Transverse colon (tissue), 4 donors: ENCODE measurements at regions of chr4 and their contacts with region 1.

Region 1: DNA sequence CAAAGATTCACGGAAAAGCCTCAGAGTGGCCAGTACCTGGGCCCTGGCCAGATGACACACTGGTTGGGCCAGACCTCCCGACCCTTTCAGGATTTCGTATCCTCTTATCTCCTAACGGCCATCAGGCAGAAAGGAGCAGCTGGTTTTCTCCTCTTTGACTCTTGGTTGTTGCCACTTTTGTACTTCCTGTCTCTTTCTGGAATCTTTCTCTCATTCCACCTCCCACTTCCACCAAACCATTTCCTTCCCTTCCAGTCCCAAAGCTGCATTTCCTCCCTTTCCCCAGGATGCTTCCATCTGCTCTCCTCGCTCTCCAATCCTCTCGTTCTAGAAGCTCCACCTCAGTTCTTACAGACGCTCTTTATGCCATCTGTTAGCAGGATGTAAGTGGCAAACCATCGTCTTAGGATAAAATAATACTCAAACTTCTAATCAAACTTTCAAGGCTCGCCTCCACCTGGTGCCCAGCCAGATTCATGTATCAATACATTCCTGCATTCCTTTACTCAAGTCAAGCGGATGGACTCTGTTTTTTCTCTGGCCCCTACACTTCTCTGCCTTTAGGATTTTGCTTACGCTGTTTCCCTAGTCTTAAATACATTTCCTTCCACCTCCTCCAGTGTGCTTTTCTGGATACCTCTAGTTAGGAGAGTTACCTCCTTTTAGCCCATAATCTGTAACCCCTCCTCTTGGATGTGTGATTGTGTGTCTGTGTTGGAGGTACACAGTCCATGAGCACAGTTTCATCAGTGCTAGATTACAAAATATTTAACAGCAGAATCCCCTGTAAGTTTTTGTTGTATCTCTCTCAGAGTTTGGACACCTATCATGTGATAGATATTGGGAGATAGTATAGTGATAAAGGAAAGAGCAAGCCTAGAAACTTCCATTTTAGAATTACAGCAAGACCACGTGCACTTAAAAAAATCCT is 70.4 kb downstream of the LDB2 start:
- DNase-seq: no peak
- H3K4me3 ChIP-seq: no peak overlapping the region
- H3K27ac ChIP-seq: peak overlapping the region in 1 of 4 donors; percentile 3
- H3K4me1 ChIP-seq: no peaks in the 10 kb centered on the region
- H3K27me3 ChIP-seq: no peaks in the 10 kb centered on the region
- CTCF ChIP-seq: no peak
- EP300 ChIP-seq: no peak
- POLR2A ChIP-seq: no peak

Region 2: GRCh38 chr4:16006791-16007446 is 821.1 kb before region 1 on chr4:
- in situ Hi-C with region 1: no loop called
- intact Hi-C with region 1: loop called (anchors 5 kb)
- DNase-seq: no peak
- H3K4me3 ChIP-seq: no peak overlapping the region
- H3K27ac ChIP-seq: no peak overlapping the region
- H3K4me1 ChIP-seq: no peaks in the 10 kb centered on the region
- H3K27me3 ChIP-seq: no peaks in the 10 kb centered on the region
- CTCF ChIP-seq: no peak
- EP300 ChIP-seq: no peak
- POLR2A ChIP-seq: no peak

Region 3: DNA sequence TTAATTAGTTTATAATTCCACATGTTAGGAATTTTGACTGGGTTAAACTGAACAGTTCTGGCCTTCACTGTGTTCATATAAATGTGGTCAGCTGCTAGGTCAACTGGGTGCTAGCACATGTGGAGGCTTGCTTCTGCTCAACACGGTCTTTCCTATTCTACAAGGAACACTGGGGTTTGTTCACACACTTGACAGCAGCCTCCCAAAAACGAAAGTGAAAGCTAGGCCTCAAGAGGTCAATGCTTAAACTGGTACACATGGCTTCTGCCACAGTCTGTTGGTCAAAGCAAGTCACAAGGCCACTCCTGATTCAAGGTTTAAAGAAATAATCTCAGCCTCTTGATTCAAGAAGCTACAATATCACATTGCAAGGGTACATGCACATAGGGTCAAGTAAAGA is 557.3 kb after region 1 on chr4:
- in situ Hi-C with region 1: no loop called
- intact Hi-C with region 1: no loop called
- DNase-seq: no peak
- H3K4me3 ChIP-seq: no peak overlapping the region
- H3K27ac ChIP-seq: no peak overlapping the region
- H3K4me1 ChIP-seq: no peaks in the 10 kb centered on the region
- H3K27me3 ChIP-seq: no peaks in the 10 kb centered on the region
- CTCF ChIP-seq: no peak
- EP300 ChIP-seq: no peak
- POLR2A ChIP-seq: no peak